Activated CD8-positive, alpha-beta T cell treated with anti-CD3 and anti-CD28 coated beads for 36 hours (primary cell): ENCODE measurements at regions of chr15 and their contacts with region 1.

Region 1: DNA sequence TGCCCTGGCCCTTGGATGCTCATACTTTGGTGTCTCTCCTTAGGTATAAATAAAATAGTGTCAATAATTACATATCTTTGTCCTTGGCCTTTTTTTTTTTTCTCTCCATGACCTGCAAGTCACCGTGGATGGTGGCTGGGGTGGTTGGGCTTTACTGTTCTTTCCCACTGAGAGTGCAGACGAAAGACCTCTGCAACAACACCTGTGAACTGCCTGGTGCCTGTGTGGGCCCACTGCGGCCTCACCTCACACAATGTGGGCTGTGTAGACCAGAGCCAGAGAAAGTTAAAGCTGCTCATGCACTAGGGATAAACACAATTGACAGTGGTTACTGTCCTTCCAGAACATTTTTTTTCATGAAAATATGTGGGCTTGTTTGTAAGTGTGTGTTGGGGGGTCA is 39.0 kb downstream of the CCDC32 start:
- DNase-seq: no peak
- ATAC-seq: no peak
- H3K4me3 Mint-ChIP-seq: no peak overlapping the region
- H3K27ac Mint-ChIP-seq: no peak overlapping the region
- H3K4me1 Mint-ChIP-seq: no peaks in the 10 kb centered on the region
- H3K27me3 Mint-ChIP-seq: no peaks in the 10 kb centered on the region
- CTCF ChIP-seq: no peak

Region 2: DNA sequence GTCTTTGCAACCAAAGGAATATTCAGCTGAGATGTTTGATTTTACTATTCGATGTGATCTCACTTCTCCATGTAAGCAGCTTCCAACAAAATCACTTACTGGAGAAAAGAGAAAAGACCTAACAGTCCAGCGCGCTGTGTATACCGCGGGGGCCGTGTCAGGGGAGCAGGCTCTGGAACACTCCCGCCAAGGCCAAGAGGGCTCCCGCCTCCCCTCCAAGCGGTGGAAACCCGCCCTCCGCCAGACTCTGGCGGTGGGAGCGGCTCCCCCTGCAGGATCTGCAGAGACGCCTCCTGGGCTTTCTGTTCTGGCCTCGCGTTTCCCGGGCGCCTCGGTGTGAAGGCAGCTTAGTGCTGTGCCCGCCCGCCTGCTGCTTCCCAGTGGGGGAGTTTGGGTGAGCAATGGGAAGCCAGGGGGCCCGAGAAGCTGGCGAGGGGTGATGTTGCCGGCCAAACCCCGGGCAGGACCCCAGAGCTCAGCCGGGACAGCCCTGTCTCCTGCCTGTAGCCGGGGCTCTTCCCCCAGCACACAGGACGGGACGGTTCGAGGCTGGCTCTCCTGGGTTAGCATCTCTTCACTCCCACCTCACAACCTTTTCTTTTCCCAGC is 18.8 kb before region 1 on chr15:
- CTCF ChIA-PET with region 1: interaction called, 17 read pairs
- POLR2A ChIA-PET with region 1: no interaction called
- intact Hi-C with region 1: no loop called
- DNase-seq: peak; percentile 71
- ATAC-seq: peak; percentile 85
- H3K4me3 Mint-ChIP-seq: peak overlapping the region; percentile 4
- H3K27ac Mint-ChIP-seq: no peak overlapping the region
- H3K4me1 Mint-ChIP-seq: peaks cover 19% of the 10 kb centered on the region
- H3K27me3 Mint-ChIP-seq: peaks cover 40% of the 10 kb centered on the region
- CTCF ChIP-seq: peak; percentile 79